Cardiac septum (tissue), 1 donor: ENCODE measurements at regions of chr1 and their contacts with region 1.

Region 1: DNA sequence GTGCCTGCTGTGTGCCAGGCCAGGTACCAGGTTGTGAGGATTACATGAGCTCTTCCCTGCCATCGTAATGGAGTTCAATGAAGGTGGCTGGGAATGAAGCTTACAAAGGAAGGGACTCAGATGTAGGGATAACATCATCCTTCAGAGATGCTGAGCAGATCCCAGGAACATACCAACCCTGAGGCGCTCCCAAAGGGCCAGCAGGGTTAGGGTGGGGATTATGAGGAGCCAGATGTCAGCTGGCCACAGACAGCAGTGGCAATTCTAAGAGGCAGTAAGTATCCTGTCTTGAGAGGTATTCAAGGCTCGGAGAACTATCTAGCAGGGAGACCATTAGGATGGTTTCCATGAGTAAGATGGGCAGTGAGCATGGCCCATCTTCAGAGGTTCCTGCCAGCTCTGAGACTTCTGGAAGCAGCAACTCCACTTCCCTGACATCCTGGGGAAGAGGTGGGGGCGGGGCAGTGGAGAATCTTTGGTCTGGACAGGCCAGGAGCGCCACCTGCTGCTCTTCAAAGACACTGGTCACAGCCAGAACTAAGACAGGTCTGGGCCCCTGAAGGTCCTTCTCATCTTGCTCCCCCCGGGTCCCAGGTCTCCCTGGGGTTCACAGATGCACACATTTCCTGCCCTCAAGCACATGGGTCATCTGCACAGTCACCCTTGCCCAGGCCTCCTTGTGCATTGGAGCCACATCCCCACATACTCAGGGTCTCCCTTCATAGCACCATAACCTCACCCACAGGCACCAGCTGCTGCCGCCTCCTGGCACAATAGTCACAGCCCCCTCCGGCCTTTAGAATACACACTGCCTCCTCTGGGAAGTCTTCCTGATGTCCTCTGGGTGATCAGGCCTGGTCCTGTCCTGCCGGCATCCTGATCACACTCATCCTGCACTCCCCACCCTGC is 2.7 kb upstream of the SDC3 start:
- DNase-seq: peak; percentile 91

Region 2: GRCh38 chr1:30719406-30720270 is 191.7 kb before region 1 on chr1:
- intact Hi-C with region 1: loop called (anchors 1 kb)
- DNase-seq: no peak

Region 3: GRCh38 chr1:30779294-30780071 is 131.8 kb before region 1 on chr1:
- intact Hi-C with region 1: loop called (anchors 1 kb)
- DNase-seq: peak; percentile 94

Region 4: GRCh38 chr1:30801771-30802198 is 109.5 kb before region 1 on chr1:
- intact Hi-C with region 1: loop called (anchors 1 kb)
- DNase-seq: peak; percentile 93

Region 5: DNA sequence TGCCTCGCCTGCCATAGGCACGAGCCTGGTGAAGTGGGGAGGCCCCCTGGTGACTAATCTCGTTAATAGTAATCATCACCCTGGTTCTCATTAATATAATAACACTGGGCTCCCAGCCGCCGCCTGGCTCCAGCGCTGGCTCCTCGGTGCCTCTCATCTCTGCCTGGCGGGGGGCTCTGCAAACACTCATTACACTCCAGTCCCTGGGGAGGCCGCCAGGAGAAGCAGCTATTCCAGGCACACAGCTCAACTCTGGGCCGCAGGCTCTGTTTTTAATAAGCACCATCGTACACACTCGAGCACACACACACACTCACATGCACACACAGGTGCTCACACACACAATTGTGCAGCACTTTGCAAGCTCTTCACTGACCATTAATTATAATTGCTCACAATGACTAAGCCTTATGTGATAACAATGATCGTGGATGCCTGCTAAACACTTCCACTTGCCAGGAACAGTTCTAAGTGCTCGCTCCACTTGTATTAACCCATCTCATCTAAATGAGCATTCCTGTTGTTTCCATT is 55.0 kb before region 1 on chr1:
- intact Hi-C with region 1: loop called (anchors 5 kb)
- DNase-seq: no peak